HepG2 (cell line): ENCODE measurements at regions of chr6 and their contacts with region 1.

Region 1: DNA sequence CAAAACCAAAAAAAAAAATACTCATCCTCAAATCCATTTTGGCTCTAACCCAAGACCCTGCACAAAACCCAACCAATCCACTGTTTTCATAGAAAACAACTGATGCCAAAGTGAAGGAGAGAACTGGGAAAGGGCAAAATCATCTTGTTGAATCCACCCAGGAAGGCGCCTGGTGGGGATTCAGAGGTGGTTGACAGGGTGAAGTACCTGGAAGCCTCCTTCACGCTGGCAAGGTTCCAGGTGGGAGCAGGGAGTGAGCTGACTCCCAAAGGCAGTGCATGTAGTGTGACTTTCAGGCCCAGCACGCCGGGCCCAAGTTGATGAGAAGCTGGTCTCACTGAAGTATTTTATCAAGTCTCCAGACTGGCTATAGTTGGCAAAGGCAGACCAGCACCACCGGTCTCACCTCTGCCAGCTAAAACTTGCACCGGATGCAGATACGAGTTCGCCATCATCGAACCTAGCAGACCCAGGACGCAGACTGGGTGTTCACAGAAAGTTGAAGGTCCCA is 16.5 kb downstream of the PPP1R10 start:
- DNase-seq: no peak
- ATAC-seq: no peak
- H3K4me3 ChIP-seq: no peak overlapping the region
- H3K27ac ChIP-seq: no peak overlapping the region
- H3K4me1 ChIP-seq: no peaks in the 10 kb centered on the region
- H3K27me3 ChIP-seq: no peaks in the 10 kb centered on the region
- CTCF ChIP-seq: no peak
- EP300 ChIP-seq: no peak
- POLR2A ChIP-seq: no peak
- RAD21 ChIP-seq: no peak

Region 2: DNA sequence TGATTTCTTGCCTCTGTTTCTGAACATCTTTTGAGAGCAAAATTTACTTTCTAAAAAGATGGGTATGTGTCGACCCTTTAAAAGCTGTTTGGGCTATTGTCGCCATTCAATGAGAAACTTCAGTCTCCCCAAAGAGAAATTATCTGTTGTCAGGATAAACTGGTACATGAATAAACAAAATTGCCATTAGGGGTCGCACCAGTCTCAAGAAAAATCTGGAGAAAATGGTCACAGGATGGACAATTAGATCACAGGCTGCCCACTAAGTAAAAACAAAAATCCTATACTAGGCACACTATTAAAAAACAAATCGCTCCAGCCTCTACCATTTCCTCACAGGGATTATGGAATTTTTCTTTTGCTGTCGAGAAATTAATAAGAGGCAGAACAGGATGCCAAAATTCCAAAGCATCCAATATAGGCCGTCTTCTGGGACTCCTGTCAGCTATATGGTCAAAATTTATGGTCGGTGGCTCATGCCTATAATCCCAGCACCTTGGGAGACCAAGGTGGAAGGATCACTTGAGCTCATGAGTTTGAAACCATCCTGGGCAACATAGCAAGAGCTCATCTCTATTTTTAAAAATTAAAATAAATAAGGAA is 116.7 kb before region 1 on chr6:
- CTCF ChIA-PET with region 1: interaction called, 19 read pairs
- POLR2A ChIA-PET with region 1: interaction called, 3 read pairs
- in situ Hi-C with region 1: loop called (anchors 5 kb)
- intact Hi-C with region 1: loop called (anchors 2 kb)
- DNase-seq: peak; percentile 66
- ATAC-seq: no peak
- H3K4me3 ChIP-seq: no peak overlapping the region
- H3K27ac ChIP-seq: no peak overlapping the region
- H3K4me1 ChIP-seq: peaks cover 26% of the 10 kb centered on the region
- H3K27me3 ChIP-seq: peaks cover 0 to 29% of the 10 kb centered on the region in 2 experiments; a peak in 3 of 5 replicates
- CTCF ChIP-seq: peak; percentile 81
- EP300 ChIP-seq: no peak
- POLR2A ChIP-seq: no peak
- RAD21 ChIP-seq: peak; percentile 58; the same call in 1 of the 2 replicates

Region 3: GRCh38 chr6:30541515-30542403 is 58.7 kb before region 1 on chr6:
- CTCF ChIA-PET with region 1: interaction called, 10 read pairs
- POLR2A ChIA-PET with region 1: interaction called, 3 read pairs
- in situ Hi-C with region 1: no loop called
- intact Hi-C with region 1: loop called (anchors 1 kb)
- DNase-seq: peak; percentile 76
- ATAC-seq: peak; percentile 88
- H3K4me3 ChIP-seq: peak overlapping the region; percentile 30 to 66 (median 44); a peak in 5 of 6 replicates
- H3K27ac ChIP-seq: no peak overlapping the region
- H3K4me1 ChIP-seq: peaks cover 7% of the 10 kb centered on the region; the same call in 1 of the 2 replicates
- H3K27me3 ChIP-seq: no peaks in the 10 kb centered on the region
- CTCF ChIP-seq: peak; percentile 94
- EP300 ChIP-seq: no peak
- POLR2A ChIP-seq: no peak
- RAD21 ChIP-seq: peak; percentile 78

Region 4: DNA sequence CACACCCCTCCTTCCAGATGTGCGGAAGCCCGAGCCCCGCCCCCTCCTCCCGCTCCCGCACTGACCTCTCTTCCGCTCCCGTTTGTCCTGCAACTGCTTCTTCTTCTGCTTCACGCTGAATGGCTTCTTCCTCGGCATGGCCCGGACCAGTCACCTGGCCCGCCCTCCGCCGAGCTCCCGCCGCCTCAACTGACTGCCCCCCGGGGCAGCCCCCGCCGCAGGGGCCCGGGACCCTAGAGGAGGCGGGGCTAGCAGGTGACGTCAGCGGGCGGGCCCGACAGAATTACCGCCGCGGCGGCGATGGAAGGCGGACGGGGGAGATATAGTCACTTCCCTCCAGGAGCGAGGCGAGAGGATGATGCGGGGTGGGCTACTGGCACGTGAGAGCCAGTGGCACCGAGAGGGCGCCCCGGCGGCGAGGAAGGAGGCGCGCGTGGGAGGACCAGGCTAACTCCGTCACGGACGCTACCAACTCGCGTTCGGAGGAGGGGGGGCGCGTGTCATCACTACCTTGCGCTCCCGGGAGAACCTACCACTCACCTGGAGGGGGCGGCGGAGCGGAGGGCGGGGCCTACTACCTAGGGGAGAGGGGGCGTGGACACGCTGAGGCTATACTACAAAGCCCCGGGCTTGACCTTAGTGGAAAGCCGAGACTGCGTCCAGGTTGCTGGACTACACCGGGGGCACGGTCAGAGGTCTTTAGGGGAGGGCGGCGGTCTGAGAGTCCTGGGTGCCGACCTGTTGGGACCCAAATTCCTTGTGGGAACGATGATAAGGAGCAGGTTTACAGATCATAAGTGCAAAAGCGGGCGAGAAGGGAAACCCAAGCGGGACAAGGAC is 44.2 kb before region 1 on chr6 and contains the start of gene GNL1:
- CTCF ChIA-PET with region 1: no interaction called
- POLR2A ChIA-PET with region 1: interaction called, 15 read pairs
- in situ Hi-C with region 1: no loop called
- intact Hi-C with region 1: no loop called
- DNase-seq: peak; percentile 94
- ATAC-seq: peak; percentile 85
- H3K4me3 ChIP-seq: peak within 1 kb of the TSS; percentile 87 to 93 (median 90)
- H3K27ac ChIP-seq: peak within 1 kb of the TSS; percentile 94
- H3K4me1 ChIP-seq: peaks cover 26% of the 10 kb centered on the region
- H3K27me3 ChIP-seq: no peaks in the 10 kb centered on the region; a peak in 1 of 5 replicates
- CTCF ChIP-seq: no peak
- EP300 ChIP-seq: peak in 1 of 2 experiments; percentile 49; a peak in 2 of 4 replicates
- POLR2A ChIP-seq: peak; percentile 82 to 85; a peak in 3 of 4 replicates
- RAD21 ChIP-seq: peak; percentile 44; the same call in 1 of the 2 replicates
- total RNA-seq, gene GNL1: 54.8 and 55.6 TPM in 2 replicates

Region 5: GRCh38 chr6:30571075-30571768 is 29.3 kb before region 1 on chr6 and contains the start of gene ABCF1:
- CTCF ChIA-PET with region 1: no interaction called
- POLR2A ChIA-PET with region 1: interaction called, 15 read pairs
- in situ Hi-C with region 1: no loop called
- intact Hi-C with region 1: no loop called
- DNase-seq: peak; percentile 94
- ATAC-seq: peak; percentile 92
- H3K4me3 ChIP-seq: peak within 1 kb of the TSS; percentile 67 to 88 (median 71)
- H3K27ac ChIP-seq: peak within 1 kb of the TSS; percentile 80
- H3K4me1 ChIP-seq: peaks cover 51% of the 10 kb centered on the region
- H3K27me3 ChIP-seq: no peaks in the 10 kb centered on the region; a peak in 1 of 5 replicates
- CTCF ChIP-seq: peak; percentile 18; the same call in 1 of the 2 replicates
- EP300 ChIP-seq: peak in 1 of 2 experiments; percentile 26; a peak in 1 of 4 replicates
- POLR2A ChIP-seq: peak; percentile 88 to 95
- RAD21 ChIP-seq: no peak
- total RNA-seq, gene ABCF1: 98.9 and 104 TPM in 2 replicates

Region 6: GRCh38 chr6:30611150-30611855 is 10.8 kb after region 1 on chr6:
- CTCF ChIA-PET with region 1: no interaction called
- POLR2A ChIA-PET with region 1: interaction called, 172 read pairs
- in situ Hi-C with region 1: no loop called
- intact Hi-C with region 1: no loop called
- DNase-seq: no peak
- ATAC-seq: no peak
- H3K4me3 ChIP-seq: no peak overlapping the region
- H3K27ac ChIP-seq: no peak overlapping the region
- H3K4me1 ChIP-seq: peaks cover 22% of the 10 kb centered on the region
- H3K27me3 ChIP-seq: no peaks in the 10 kb centered on the region
- CTCF ChIP-seq: no peak
- EP300 ChIP-seq: no peak
- POLR2A ChIP-seq: peak in 1 of 2 experiments; percentile 16; a peak in 1 of 4 replicates
- RAD21 ChIP-seq: no peak

Region 7: GRCh38 chr6:30626484-30627366 is 26.2 kb after region 1 on chr6 and contains the start of gene ATAT1:
- CTCF ChIA-PET with region 1: no interaction called
- POLR2A ChIA-PET with region 1: no interaction called
- in situ Hi-C with region 1: no loop called
- intact Hi-C with region 1: no loop called
- DNase-seq: peak; percentile 88
- ATAC-seq: peak; percentile 98
- H3K4me3 ChIP-seq: peak within 1 kb of the TSS; percentile 69 to 92 (median 72)
- H3K27ac ChIP-seq: peak within 1 kb of the TSS; percentile 76
- H3K4me1 ChIP-seq: peaks cover 17% of the 10 kb centered on the region
- H3K27me3 ChIP-seq: no peaks in the 10 kb centered on the region; a peak in 1 of 5 replicates
- CTCF ChIP-seq: peak; percentile 87
- EP300 ChIP-seq: peak in 1 of 2 experiments; percentile 36; a peak in 2 of 4 replicates
- POLR2A ChIP-seq: peak; percentile 88 to 97
- RAD21 ChIP-seq: peak; percentile 74
- total RNA-seq, gene ATAT1: 5.4 and 9.2 TPM in 2 replicates